Prostate gland (tissue), 2 donors: ENCODE measurements at regions of chr19 and their contacts with region 1.

Region 1: GRCh38 chr19:34974646-34975045 is 10.6 kb upstream of the ZNF792 start:
- DNase-seq: no peak
- H3K4me3 ChIP-seq: no peak overlapping the region
- H3K27ac ChIP-seq: no peak overlapping the region
- H3K4me1 ChIP-seq: no peaks in the 10 kb centered on the region
- H3K27me3 ChIP-seq: no peaks in the 10 kb centered on the region
- CTCF ChIP-seq: no peak
- POLR2A ChIP-seq: no peak

Region 2: GRCh38 chr19:35013031-35013819 is 38.6 kb after region 1 on chr19:
- intact Hi-C with region 1: loop called (anchors 2 kb)
- DNase-seq: peak; percentile 64
- H3K4me3 ChIP-seq: no peak overlapping the region
- H3K27ac ChIP-seq: no peak overlapping the region
- H3K4me1 ChIP-seq: no peaks in the 10 kb centered on the region
- H3K27me3 ChIP-seq: no peaks in the 10 kb centered on the region
- CTCF ChIP-seq: peak; percentile 93 to 98 (median 96)
- POLR2A ChIP-seq: no peak

Region 3: DNA sequence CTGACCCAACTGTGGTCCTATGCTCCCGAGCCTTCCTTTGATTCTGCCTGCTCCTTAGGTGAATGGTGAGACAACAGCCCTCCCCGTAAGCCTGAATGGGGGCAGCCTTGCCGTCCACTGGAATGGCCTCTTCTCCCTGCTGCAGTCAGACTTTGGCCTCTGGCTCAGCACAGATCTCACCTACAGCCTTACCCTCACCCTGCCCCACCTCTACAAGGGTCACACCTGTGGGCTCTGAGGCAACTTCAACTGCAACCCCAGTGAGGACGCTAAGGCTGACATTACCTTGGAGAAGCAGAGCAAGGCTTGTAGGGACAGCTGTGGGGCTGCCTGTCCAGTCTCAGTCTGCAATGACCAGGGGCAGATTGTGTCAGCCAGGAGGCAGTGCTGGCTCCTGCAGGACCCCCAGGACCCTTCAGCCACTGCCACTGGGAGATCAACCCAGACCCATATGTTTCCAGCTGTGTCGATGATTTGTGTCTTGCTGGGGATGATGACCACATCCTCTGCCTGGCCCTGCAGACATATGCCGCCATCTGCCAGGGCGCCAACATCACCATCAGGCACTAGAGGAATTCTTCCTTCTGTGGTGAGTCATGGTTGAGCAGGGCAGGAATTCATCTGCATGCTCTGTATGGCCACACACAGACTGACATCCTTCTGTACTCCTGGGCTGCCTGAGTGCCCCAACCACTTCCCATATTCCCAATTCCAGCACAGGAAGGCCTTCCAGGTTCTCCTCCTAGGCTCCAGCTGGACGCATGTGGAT is 113.7 kb after region 1 on chr19:
- intact Hi-C with region 1: loop called (anchors 10 kb)
- DNase-seq: no peak
- H3K4me3 ChIP-seq: no peak overlapping the region
- H3K27ac ChIP-seq: no peak overlapping the region
- H3K4me1 ChIP-seq: no peaks in the 10 kb centered on the region
- H3K27me3 ChIP-seq: no peaks in the 10 kb centered on the region
- CTCF ChIP-seq: no peak
- POLR2A ChIP-seq: no peak